ENCODE measurements at regions of chr5 and their contacts with region 1.

Region 1: DNA sequence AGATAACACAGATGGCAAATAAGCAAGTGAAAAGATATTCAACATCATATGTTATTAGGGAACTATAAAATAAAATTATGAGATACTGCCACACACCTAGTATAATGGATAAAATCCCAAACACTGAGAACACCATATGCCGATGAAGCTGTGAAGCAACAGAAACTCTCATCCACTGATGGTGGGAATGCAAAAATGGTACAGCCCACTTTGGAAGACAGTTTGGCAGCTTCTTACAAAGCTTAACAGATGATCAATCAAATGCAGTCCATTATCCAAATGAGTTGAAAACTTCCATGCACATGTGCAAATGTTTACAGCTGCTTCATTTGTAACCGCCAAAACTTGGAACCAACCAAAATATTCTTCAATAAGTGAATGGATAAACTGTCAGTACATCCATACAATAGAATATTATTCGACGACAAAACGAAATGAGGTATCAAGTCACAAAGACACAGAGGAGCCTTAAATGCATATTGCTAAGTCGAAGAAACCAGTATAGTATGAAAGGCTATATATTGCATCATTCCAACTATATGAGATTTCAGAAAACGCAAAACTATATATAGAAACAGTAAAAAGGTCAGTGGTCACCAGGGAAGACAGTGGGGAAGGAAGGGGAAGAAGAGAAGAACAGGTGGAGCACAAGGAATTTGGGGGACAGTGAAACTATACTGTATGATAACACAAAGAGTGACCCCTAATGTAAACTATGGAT is 14.9 kb downstream of the PFDN1 start:
- DNase-seq: no peak
- ATAC-seq: no peak
- H3K4me3 ChIP-seq: no peak overlapping the region
- H3K27ac ChIP-seq: no peak overlapping the region
- H3K4me1 ChIP-seq: peaks cover 11 to 85% (median 54%) of the 10 kb centered on the region in 9 donors
- H3K27me3 ChIP-seq: no peaks in the 10 kb centered on the region
- CTCF ChIP-seq: no peak

Region 2: GRCh38 chr5:139882961-139883539 is 404.9 kb before region 1 on chr5:
- intact Hi-C with region 1: no loop called
- DNase-seq: no peak
- ATAC-seq: no peak
- H3K4me3 ChIP-seq: no peak overlapping the region
- H3K27ac ChIP-seq: no peak overlapping the region
- H3K4me1 ChIP-seq: peaks cover 0 to 42% (median 20%) of the 10 kb centered on the region in 9 donors
- H3K27me3 ChIP-seq: no peaks in the 10 kb centered on the region
- CTCF ChIP-seq: no peak

Region 3: DNA sequence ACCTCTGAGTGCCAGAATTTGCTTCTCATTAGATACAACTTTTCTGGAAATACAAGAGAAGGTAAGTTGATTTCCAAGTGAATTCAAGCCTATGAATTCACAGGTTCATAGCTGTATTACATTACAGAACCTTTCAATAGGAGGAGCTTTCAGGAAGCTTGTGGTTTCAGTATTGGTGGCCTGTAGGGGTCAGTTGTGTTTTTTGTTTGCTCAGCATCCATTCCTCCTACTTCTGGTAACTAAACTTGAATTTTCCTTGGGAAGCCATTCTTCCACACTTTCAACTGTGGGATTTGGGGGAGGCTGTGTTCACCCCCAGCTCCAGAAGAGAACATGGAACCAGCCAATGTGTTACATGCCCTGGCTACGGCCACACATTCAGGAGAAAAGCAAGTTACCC is 118.6 kb before region 1 on chr5:
- intact Hi-C with region 1: no loop called
- DNase-seq: no peak
- ATAC-seq: no peak
- H3K4me3 ChIP-seq: no peak overlapping the region
- H3K27ac ChIP-seq: no peak overlapping the region
- H3K4me1 ChIP-seq: peaks cover 0 to 21% (median 15%) of the 10 kb centered on the region in 9 donors
- H3K27me3 ChIP-seq: no peaks in the 10 kb centered on the region
- CTCF ChIP-seq: peak in 6 of 9 donors; percentile 13 to 44 (median 38)

Region 4: DNA sequence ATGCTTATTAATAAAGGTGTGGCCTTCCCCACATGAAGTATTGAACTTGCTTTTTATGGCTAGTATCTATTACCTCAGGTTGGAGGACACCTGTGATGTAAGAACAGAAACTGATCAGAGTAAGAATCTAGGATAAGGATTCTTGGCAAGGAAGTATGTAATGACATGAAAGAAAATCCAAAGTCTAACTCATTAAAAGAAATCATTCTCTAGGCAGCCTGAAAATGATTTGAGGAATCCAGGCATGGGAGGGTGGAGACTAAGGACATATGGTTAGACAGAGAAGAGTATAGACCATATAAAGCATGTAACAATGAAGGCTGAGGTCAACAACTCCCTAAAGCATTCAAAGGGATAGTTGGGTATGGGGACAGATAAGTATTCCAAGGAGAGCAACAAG is 18.0 kb before region 1 on chr5:
- intact Hi-C with region 1: loop called in 1 of 10 experiments (anchors 2 kb)
- DNase-seq: no peak
- ATAC-seq: no peak
- H3K4me3 ChIP-seq: no peak overlapping the region
- H3K27ac ChIP-seq: peak overlapping the region in 1 of 10 donors; percentile 14
- H3K4me1 ChIP-seq: peaks cover 9 to 71% (median 48%) of the 10 kb centered on the region in 9 donors
- H3K27me3 ChIP-seq: no peaks in the 10 kb centered on the region
- CTCF ChIP-seq: no peak